Adrenal gland (tissue), 19 donors: ENCODE measurements at regions of chr11 and their contacts with region 1.

Region 1: GRCh38 chr11:97140885-97141494 is 751.2 kb downstream of the JRKL start:
- DNase-seq: peak in 2 of 7 donors; percentile 6 to 17
- H3K4me3 ChIP-seq: no peak overlapping the region
- H3K27ac ChIP-seq: no peak overlapping the region
- H3K4me1 ChIP-seq: no peaks in the 10 kb centered on the region
- H3K27me3 ChIP-seq: no peaks in the 10 kb centered on the region
- CTCF ChIP-seq: peak; percentile 35 to 80 (median 61)
- POLR2A ChIP-seq: no peak

Region 2: GRCh38 chr11:96827164-96827563 is 313.8 kb before region 1 on chr11:
- intact Hi-C with region 1: loop called in 1 of 2 experiments (anchors 5 kb)
- DNase-seq: peak in 6 of 7 donors; percentile 16 to 32 (median 20)
- H3K4me3 ChIP-seq: no peak overlapping the region
- H3K27ac ChIP-seq: no peak overlapping the region
- H3K4me1 ChIP-seq: no peaks in the 10 kb centered on the region
- H3K27me3 ChIP-seq: no peaks in the 10 kb centered on the region
- CTCF ChIP-seq: peak in 5 of 6 experiments; percentile 33 to 56 (median 44)
- POLR2A ChIP-seq: no peak

Region 3: GRCh38 chr11:96964661-96965060 is 176.3 kb before region 1 on chr11:
- intact Hi-C with region 1: no loop called
- DNase-seq: no peak
- H3K4me3 ChIP-seq: no peak overlapping the region
- H3K27ac ChIP-seq: no peak overlapping the region
- H3K4me1 ChIP-seq: no peaks in the 10 kb centered on the region
- H3K27me3 ChIP-seq: no peaks in the 10 kb centered on the region
- CTCF ChIP-seq: no peak
- POLR2A ChIP-seq: no peak

Region 4: DNA sequence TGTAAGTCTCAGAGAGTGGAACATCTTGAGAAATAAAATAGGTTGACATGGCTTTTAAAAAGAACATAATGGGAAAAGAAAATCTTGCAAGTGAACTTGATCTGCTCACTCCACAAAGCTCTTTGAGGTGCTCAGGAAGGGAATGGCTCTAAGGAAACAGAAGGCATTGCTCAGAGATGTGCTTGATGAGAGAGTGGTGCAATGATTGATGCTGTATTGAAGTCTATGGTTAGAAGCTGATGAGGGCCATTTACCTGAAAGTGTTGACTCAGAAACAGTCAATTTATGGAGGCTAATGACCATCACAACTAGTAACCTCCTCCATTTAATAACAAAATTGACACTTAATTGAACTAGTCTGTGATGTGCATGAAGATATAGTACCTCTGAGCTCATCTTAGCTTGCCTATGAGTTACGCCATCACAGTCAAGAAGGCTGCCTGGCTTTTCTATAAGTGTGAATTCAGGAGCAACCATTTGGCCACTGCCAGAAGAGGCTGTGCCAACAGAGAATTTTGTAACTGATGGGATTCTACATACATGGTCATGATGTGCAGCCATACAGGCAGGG is 112.1 kb before region 1 on chr11:
- intact Hi-C with region 1: no loop called
- DNase-seq: no peak
- H3K4me3 ChIP-seq: no peak overlapping the region
- H3K27ac ChIP-seq: no peak overlapping the region
- H3K4me1 ChIP-seq: no peaks in the 10 kb centered on the region
- H3K27me3 ChIP-seq: no peaks in the 10 kb centered on the region
- CTCF ChIP-seq: no peak
- POLR2A ChIP-seq: no peak

Region 5: DNA sequence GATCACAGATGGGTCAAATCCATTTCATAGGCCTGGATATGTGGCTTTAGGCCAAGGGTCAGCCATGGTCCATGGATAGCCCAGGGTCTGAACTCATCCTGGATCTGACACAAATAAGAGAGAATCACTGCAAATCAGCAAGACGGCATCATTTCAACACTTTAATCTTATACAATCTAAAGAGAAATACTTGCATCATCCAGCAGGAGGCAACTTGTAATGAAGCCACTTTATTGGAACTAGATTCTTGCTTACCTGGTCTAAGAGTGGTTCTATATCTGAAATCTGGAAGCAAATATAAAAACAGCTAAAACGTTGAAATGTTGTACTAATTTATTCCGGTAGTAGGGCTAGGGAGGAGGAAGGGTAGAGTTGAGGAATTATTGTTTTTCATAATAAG is 118.9 kb after region 1 on chr11:
- intact Hi-C with region 1: no loop called
- DNase-seq: no peak
- H3K4me3 ChIP-seq: no peak overlapping the region
- H3K27ac ChIP-seq: no peak overlapping the region
- H3K4me1 ChIP-seq: no peaks in the 10 kb centered on the region
- H3K27me3 ChIP-seq: no peaks in the 10 kb centered on the region
- CTCF ChIP-seq: no peak
- POLR2A ChIP-seq: no peak